ENCODE measurements at regions of chr17 and their contacts with region 1.

Region 1: DNA sequence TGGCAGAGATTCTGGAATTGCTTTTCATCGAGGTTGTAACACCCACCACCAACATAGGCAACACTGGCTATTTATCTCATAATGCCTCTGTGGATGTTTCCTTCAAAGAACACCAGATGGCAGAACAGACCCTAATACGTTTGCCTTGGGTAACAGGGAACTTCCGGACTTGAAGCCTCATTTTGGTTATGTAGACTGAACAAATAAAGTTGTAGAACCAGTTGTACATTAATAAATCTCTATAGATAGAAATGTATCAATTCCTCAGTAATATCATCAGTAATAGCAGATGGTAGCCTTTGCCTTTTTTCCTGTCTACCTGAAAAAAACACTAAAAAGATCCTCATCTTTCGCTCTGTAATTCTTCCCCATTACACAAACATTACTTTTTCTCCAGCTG is 25.9 kb upstream of the APOH start:
- DNase-seq: no peak
- ATAC-seq: no peak
- H3K4me3 ChIP-seq: no peak overlapping the region
- H3K27ac ChIP-seq: no peak overlapping the region
- H3K4me1 ChIP-seq: no peaks in the 10 kb centered on the region
- H3K27me3 ChIP-seq: no peaks in the 10 kb centered on the region

Region 2: GRCh38 chr17:66296289-66296776 is 41.2 kb after region 1 on chr17:
- intact Hi-C with region 1: no loop called
- DNase-seq: no peak
- ATAC-seq: no peak
- H3K4me3 ChIP-seq: no peak overlapping the region
- H3K27ac ChIP-seq: no peak overlapping the region
- H3K4me1 ChIP-seq: no peaks in the 10 kb centered on the region
- H3K27me3 ChIP-seq: no peaks in the 10 kb centered on the region

Region 3: DNA sequence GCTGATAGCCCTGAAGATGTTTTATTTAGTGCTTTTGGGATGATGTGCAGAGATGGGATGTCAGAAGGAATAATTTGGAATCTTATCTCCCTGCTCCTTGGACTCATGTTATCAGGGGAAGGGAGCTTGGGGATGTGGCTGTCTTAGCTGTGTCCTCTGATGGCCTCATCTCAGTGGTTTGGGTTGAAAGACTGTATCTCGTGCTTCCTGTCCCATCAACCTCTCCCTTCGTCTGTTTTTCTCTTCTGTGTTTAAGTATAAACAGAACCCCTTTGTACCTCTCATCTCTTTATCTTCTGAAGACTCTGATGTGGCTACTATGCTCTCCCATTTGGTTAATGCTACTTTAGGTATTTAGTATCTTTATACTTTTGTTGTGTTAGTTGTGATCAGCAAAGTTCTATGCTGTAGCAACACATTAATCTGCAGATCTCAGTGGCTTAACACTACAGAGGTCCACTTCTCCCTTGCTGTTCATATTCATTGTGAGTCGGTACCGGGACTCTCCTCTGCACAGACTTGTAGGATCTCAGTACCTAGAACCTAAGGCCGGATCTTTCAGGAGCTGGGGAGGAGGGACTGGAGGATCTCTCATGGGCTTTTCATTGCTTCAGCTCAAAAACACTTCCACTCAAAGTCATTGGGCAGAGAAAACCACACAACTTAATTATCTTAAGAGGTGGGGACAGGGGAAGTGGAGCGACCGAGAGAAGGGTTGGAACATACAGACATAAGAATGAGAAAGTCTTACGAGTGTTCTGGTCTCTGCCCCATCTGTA is 76.1 kb after region 1 on chr17:
- intact Hi-C with region 1: no loop called
- DNase-seq: no peak
- ATAC-seq: peak; percentile 29
- H3K4me3 ChIP-seq: no peak overlapping the region
- H3K27ac ChIP-seq: no peak overlapping the region
- H3K4me1 ChIP-seq: no peaks in the 10 kb centered on the region
- H3K27me3 ChIP-seq: no peaks in the 10 kb centered on the region

Region 4: GRCh38 chr17:66567234-66568170 is 312.4 kb after region 1 on chr17:
- intact Hi-C with region 1: loop called (anchors 2 to 5 kb)
- DNase-seq: peak; percentile 82 to 92
- ATAC-seq: peak; percentile 71
- H3K4me3 ChIP-seq: no peak overlapping the region
- H3K27ac ChIP-seq: no peak overlapping the region
- H3K4me1 ChIP-seq: no peaks in the 10 kb centered on the region
- H3K27me3 ChIP-seq: no peaks in the 10 kb centered on the region

Region 5: DNA sequence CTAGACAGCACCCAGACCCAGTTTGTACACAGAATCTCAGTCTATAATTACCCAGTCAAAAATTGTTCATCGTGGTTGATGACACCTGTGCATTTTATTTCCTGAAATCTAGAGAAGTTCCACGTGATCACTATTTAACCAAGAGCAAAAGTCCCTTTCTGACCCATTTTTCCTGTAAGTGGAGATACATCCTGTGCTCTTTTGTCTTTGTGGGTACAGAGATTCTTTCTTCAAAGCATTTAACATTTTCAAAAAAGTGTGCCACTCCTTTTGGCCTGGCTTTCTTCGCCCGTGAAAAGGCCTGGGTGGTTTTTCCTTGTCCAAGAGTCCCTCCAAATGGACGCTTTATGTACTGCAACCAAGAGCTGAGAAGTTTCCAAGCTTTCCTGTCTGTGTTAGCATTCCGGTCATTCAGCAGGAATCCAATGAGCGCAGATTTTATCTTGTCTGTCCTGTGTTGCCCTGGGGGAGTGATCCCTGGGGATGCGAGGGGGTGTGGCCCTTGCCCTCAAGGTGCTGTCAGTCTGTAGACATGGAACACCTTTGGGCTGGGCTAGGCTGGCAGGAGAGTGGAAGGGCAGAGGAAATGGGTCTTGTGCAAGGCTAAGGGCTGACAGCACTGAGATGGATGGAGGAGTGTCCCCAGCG is 418.7 kb after region 1 on chr17:
- intact Hi-C with region 1: loop called (anchors 2 kb)
- DNase-seq: no peak
- ATAC-seq: peak; percentile 67
- H3K4me3 ChIP-seq: no peak overlapping the region
- H3K27ac ChIP-seq: no peak overlapping the region
- H3K4me1 ChIP-seq: no peaks in the 10 kb centered on the region
- H3K27me3 ChIP-seq: no peaks in the 10 kb centered on the region

Measured in aorta (tissue), 5 donors.